Gastrocnemius medialis (tissue), 4 donors: ENCODE measurements at regions of chr20 and their contacts with region 1.

Region 1: DNA sequence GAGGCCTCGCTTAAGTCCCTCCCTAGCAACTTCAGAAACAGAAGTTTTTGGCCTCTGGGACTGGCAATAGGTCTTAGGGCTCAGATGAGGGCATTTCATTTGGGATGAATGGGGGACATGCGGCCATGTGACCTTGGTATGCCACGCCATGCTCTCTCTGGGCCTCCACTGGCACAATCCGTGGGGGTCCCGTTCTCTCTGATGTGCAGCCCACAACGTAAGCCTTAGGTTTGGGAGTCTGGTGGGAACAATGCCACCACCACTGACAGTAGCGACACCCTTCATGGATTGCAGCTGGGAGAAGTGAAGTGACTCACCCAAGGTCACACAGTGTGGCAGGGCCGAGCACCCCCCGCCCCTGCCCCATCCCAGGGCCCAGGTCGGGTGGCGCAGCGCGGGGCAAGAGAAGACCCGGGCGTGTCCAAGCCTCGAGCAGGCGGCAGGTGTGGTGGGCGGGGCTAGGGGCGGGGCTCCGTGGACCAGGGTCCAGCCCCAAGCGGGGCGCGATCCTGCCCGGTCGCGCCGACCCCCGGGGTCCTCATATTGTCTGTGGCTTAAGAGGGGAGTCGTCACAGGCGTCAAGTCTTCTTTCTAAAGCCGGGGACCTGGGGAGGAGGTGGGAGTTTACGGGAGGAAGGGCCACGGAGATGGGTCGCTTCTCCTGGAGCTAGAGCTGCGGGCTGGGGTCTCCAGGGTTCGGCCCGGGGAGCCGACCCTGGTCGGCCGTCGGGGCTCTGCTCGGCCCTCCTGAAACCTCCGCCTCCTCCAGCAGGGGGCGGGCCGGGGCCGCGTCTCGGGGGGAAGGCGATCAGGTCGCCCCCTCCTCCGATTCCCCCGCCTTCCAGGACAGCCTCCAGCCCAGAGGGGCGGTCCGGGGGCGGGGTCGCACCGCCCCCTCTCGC is 698 bp upstream of the CEBPB start:
- DNase-seq: peak; percentile 86 to 87
- ATAC-seq: peak; percentile 45 to 48
- H3K4me3 ChIP-seq: peak overlapping the region; percentile 86 to 96 (median 90)
- H3K27ac ChIP-seq: peak overlapping the region; percentile 91 to 100 (median 97)
- H3K4me1 ChIP-seq: peaks cover 5 to 20% of the 10 kb centered on the region in 2 donors
- H3K27me3 ChIP-seq: no peaks in the 10 kb centered on the region
- CTCF ChIP-seq: peak; percentile 70 to 94 (median 89)
- POLR2A ChIP-seq: no peak

Region 2: DNA sequence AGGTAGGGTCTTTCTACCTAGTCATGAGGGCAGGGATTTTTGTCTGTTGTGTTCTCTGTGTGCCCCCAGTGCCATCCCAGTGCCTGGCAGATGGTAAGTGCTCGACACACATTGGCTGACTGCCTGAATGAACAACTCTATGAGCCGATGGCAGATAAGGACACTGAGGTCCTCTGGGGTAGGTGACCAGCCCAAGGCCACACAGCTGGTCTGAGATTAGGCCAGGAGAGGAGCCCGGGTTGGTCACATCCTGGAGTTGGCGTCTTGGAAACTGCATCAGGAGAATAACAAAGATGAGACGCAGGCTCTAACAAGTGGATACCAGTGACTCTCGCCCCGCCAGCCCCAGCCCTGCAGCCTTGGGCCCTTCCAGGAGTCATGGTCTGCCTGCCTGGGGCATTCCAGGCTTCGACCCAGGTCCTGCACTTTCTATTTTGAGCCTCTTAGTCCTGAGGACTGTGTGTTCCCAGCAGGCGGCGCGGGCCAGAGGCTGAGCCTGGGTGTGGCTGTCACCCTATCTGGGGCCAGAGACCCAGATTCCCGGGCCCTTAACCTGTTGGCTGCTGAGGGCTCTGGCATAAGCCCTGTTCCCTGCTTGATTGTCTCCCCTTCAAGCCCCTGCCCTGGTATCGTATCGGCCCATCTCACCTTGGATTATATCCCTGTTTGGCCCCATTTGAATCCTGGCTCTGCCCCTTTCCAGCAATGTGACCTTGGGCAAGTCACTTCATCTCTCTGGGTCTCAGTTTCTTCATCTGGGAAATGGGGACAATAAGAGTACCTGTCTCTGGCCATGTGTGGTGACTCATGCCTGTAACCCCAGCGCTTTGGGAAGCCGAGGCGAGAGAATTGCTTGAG is 89.0 kb after region 1 on chr20:
- in situ Hi-C with region 1: loop called in 2 of 4 experiments (anchors 10 kb)
- intact Hi-C with region 1: loop called (anchors 2 kb)
- DNase-seq: peak; percentile 91 to 98
- ATAC-seq: peak; percentile 79 to 85
- H3K4me3 ChIP-seq: no peak overlapping the region
- H3K27ac ChIP-seq: peak overlapping the region; percentile 87 to 96 (median 92)
- H3K4me1 ChIP-seq: peaks cover 43 to 50% of the 10 kb centered on the region in 2 donors
- H3K27me3 ChIP-seq: no peaks in the 10 kb centered on the region
- CTCF ChIP-seq: peak; percentile 46 to 54 (median 49)
- POLR2A ChIP-seq: peak; percentile 52 to 63

Region 3: GRCh38 chr20:50379049-50379990 is 189.4 kb after region 1 on chr20:
- in situ Hi-C with region 1: no loop called
- intact Hi-C with region 1: loop called (anchors 1 kb)
- DNase-seq: peak; percentile 97 to 99
- ATAC-seq: peak; percentile 89
- H3K4me3 ChIP-seq: peak overlapping the region; percentile 26 to 50 (median 40)
- H3K27ac ChIP-seq: peak overlapping the region; percentile 89 to 93 (median 92)
- H3K4me1 ChIP-seq: peaks cover 30 to 42% of the 10 kb centered on the region in 2 donors
- H3K27me3 ChIP-seq: no peaks in the 10 kb centered on the region
- CTCF ChIP-seq: no peak
- POLR2A ChIP-seq: peak; percentile 96 to 98

Region 4: GRCh38 chr20:50575847-50576720 is 386.2 kb after region 1 on chr20:
- in situ Hi-C with region 1: loop called (anchors 5 kb)
- intact Hi-C with region 1: loop called (anchors 1 kb)
- DNase-seq: peak; percentile 56 to 81
- ATAC-seq: peak; percentile 20 to 32
- H3K4me3 ChIP-seq: no peak overlapping the region
- H3K27ac ChIP-seq: peak overlapping the region; percentile 89 to 96 (median 92)
- H3K4me1 ChIP-seq: peaks cover 66 to 68% of the 10 kb centered on the region in 2 donors
- H3K27me3 ChIP-seq: no peaks in the 10 kb centered on the region
- CTCF ChIP-seq: peak; percentile 54 to 84 (median 78)
- POLR2A ChIP-seq: no peak

Region 5: GRCh38 chr20:50744143-50744792 is 554.3 kb after region 1 on chr20:
- in situ Hi-C with region 1: loop called in 1 of 4 experiments (anchors 10 kb)
- intact Hi-C with region 1: loop called (anchors 5 kb)
- DNase-seq: peak; percentile 85 to 86
- ATAC-seq: peak; percentile 97 to 99
- H3K4me3 ChIP-seq: peak overlapping the region in 1 of 4 donors; percentile 33
- H3K27ac ChIP-seq: peak overlapping the region; percentile 85 to 94 (median 92)
- H3K4me1 ChIP-seq: peaks cover 35 to 43% of the 10 kb centered on the region in 2 donors
- H3K27me3 ChIP-seq: no peaks in the 10 kb centered on the region
- CTCF ChIP-seq: peak in 4 of 5 experiments; percentile 11 to 42 (median 32)
- POLR2A ChIP-seq: no peak